Activated CD4-positive, alpha-beta memory T cell treated with anti-CD3 and anti-CD28 coated beads, Interleukin-2, amount 10 ng/mL, durations not matched to agents 7 days and 5 days (primary cell): ENCODE measurements at regions of chr10 and their contacts with region 1.

Region 1: GRCh38 chr10:124647421-124648130 is 96.6 kb downstream of the FAM53B start:
- DNase-seq: peak; percentile 88
- H3K4me3 Mint-ChIP-seq: peak overlapping the region; percentile 69
- H3K27ac Mint-ChIP-seq: peak overlapping the region; percentile 95
- H3K4me1 Mint-ChIP-seq: peaks cover 90% of the 10 kb centered on the region
- H3K27me3 Mint-ChIP-seq: no peaks in the 10 kb centered on the region

Region 2: DNA sequence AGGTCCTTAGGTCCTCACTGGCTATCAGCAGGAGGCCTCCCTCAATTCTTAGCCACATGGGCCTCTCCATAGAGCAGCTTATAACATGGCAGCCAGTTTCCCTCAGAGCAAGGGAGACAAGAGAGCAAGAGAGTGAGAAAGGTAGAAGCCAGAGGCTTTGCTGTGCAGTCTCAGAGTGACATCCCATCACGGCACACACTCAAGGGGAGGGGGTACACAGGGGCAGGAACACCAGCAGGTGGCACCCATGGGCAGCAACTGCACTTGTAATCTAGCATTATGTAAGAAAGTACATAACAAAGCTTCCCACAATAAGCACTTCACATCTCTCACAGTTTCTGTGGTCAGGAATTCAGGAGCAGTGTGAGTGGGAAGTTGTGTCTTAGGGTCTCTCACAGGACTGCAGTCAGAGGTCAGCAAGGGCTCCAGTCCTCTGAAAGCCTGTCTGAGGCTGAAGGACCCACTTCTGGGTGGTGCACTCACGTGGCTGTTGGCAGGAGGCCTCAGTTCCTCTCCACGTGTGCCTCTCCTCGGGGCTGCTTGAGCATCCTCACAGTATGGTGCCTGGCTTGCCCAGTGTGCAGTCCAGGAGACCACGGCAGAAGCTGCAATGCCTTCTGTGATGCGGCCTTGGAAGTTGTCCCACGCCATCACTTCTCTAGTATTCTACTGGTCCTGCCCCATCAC is 388.3 kb before region 1 on chr10:
- CTCF ChIA-PET with region 1: no interaction called
- POLR2A ChIA-PET with region 1: no interaction called
- DNase-seq: no peak
- H3K4me3 Mint-ChIP-seq: no peak overlapping the region
- H3K27ac Mint-ChIP-seq: no peak overlapping the region
- H3K4me1 Mint-ChIP-seq: no peaks in the 10 kb centered on the region
- H3K27me3 Mint-ChIP-seq: peaks cover 1% of the 10 kb centered on the region

Region 3: GRCh38 chr10:124486635-124487034 is 160.9 kb before region 1 on chr10:
- CTCF ChIA-PET with region 1: no interaction called
- POLR2A ChIA-PET with region 1: no interaction called
- DNase-seq: no peak
- H3K4me3 Mint-ChIP-seq: no peak overlapping the region
- H3K27ac Mint-ChIP-seq: no peak overlapping the region
- H3K4me1 Mint-ChIP-seq: no peaks in the 10 kb centered on the region
- H3K27me3 Mint-ChIP-seq: no peaks in the 10 kb centered on the region

Region 4: DNA sequence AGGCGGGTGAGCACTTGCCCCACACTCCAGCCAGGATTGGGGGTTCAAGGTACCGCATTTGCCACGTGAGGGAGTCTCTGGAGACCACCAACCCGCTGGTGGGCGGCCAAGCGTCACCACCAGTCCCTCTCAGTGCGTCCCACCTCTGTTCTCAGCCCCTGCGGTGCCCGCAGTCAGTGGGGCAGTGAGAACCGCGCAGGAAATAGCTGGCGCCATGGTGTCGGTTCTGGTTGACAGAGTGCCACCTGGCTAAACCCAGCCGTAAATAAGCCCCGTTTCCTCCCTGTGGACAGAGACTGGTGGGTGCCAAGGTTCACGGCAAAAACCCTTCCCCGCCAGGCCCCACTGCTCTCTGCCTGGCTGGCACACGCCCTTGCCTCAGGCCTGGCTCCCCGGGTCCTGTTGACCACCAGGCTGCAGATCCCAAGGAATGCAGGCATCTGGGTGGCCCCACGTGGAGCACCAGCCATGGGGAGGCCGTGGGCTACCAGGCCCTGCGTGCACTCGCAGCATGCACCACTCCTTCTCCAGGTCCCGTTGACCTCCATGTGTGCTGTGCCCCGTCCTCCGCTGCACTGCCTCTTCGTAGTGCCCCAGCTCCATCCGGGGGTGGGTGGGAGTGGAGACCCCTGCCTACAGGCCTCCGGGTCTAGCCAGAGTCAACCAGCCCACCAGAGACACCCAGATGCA is 46.0 kb before region 1 on chr10:
- CTCF ChIA-PET with region 1: no interaction called
- POLR2A ChIA-PET with region 1: no interaction called
- DNase-seq: no peak
- H3K4me3 Mint-ChIP-seq: no peak overlapping the region
- H3K27ac Mint-ChIP-seq: no peak overlapping the region
- H3K4me1 Mint-ChIP-seq: no peaks in the 10 kb centered on the region
- H3K27me3 Mint-ChIP-seq: no peaks in the 10 kb centered on the region

Region 5: DNA sequence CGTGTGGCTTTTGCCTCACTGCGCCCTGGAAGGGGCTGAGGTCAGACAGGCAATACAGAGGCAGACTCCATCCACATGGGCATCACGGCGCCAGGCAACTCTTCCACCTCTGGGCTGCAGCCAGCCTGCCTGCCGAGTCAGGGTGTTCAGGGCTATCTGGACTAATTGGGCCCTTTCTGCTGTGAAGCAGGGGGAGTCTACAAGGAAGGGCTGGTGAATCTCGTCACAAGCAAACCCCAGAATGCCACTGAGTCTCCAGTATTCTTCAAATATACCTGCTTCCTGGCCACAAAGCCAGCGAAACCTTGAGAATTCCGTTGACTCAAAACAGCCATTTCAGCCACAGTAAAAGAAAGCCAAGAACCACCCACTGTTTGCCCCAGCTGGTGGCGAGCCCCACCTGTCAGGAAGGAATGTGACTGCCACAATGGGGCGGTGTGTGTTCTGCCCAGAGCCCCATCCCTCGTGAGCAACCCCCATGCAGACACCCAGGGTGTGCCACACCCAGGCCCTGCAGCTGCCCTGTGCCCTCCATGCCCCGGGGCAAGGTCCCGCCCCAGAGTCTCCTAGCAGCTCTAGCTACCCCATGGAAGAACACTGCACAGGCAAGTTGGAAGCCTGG is 20.7 kb before region 1 on chr10:
- CTCF ChIA-PET with region 1: interaction called, 10 read pairs
- POLR2A ChIA-PET with region 1: interaction called, 23 read pairs
- DNase-seq: peak; percentile 69
- H3K4me3 Mint-ChIP-seq: peak overlapping the region; percentile 36
- H3K27ac Mint-ChIP-seq: peak overlapping the region; percentile 78
- H3K4me1 Mint-ChIP-seq: peaks cover 46% of the 10 kb centered on the region
- H3K27me3 Mint-ChIP-seq: no peaks in the 10 kb centered on the region

Region 6: GRCh38 chr10:124663766-124664360 is 16.3 kb after region 1 on chr10:
- CTCF ChIA-PET with region 1: interaction called, 44 read pairs
- POLR2A ChIA-PET with region 1: interaction called, 53 read pairs
- DNase-seq: no peak
- H3K4me3 Mint-ChIP-seq: no peak overlapping the region
- H3K27ac Mint-ChIP-seq: no peak overlapping the region
- H3K4me1 Mint-ChIP-seq: peaks cover 44% of the 10 kb centered on the region
- H3K27me3 Mint-ChIP-seq: no peaks in the 10 kb centered on the region

Region 7: GRCh38 chr10:124677749-124678556 is 30.4 kb after region 1 on chr10:
- CTCF ChIA-PET with region 1: interaction called, 12 read pairs
- POLR2A ChIA-PET with region 1: interaction called, 18 read pairs
- DNase-seq: no peak
- H3K4me3 Mint-ChIP-seq: no peak overlapping the region
- H3K27ac Mint-ChIP-seq: peak overlapping the region; percentile 91
- H3K4me1 Mint-ChIP-seq: peaks cover 68% of the 10 kb centered on the region
- H3K27me3 Mint-ChIP-seq: no peaks in the 10 kb centered on the region

Region 8: DNA sequence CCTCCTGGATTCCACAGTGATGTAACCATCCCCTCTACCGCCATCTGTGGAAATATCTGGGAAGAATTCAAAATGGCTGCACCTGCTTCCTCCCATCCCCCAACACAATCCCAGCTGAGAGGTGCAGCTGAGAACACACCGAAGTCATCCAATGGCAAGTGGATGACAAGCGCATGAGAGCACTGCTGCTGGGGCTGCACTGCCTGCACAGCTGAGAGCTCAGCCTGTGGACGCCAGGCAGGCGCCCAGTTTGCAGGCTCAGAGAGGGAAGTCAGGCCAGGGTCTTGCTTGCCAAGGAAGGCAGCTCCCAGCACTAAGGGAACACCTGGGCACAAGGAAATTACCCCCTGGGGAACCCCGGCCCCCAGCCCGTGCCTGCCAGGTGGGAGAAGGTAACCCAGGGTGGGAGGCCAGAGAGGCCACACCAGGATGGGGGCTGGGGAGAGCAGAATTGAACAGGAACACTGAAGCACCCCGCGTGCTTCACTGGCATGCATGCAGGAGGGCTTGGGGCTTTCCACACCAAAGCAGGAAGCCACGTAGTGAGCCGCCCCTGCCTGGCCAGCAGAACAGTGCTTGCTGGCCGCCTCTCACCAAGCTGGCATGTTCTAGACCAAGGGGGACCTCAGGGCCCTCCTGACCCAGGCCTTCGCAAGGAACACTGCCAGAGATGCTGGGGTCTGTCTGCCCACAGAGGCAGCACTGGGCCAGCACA is 50.4 kb after region 1 on chr10:
- CTCF ChIA-PET with region 1: interaction called, 11 read pairs
- POLR2A ChIA-PET with region 1: interaction called, 48 read pairs
- DNase-seq: peak; percentile 57
- H3K4me3 Mint-ChIP-seq: no peak overlapping the region
- H3K27ac Mint-ChIP-seq: peak overlapping the region; percentile 96
- H3K4me1 Mint-ChIP-seq: peaks cover 98% of the 10 kb centered on the region
- H3K27me3 Mint-ChIP-seq: no peaks in the 10 kb centered on the region